Activated CD4-positive, alpha-beta memory T cell treated with anti-CD3 and anti-CD28 coated beads, Interleukin-2, amount 10 ng/mL, durations not matched to agents 7 days and 5 days (primary cell): ENCODE measurements at regions of chr1 and their contacts with region 1.

Region 1: DNA sequence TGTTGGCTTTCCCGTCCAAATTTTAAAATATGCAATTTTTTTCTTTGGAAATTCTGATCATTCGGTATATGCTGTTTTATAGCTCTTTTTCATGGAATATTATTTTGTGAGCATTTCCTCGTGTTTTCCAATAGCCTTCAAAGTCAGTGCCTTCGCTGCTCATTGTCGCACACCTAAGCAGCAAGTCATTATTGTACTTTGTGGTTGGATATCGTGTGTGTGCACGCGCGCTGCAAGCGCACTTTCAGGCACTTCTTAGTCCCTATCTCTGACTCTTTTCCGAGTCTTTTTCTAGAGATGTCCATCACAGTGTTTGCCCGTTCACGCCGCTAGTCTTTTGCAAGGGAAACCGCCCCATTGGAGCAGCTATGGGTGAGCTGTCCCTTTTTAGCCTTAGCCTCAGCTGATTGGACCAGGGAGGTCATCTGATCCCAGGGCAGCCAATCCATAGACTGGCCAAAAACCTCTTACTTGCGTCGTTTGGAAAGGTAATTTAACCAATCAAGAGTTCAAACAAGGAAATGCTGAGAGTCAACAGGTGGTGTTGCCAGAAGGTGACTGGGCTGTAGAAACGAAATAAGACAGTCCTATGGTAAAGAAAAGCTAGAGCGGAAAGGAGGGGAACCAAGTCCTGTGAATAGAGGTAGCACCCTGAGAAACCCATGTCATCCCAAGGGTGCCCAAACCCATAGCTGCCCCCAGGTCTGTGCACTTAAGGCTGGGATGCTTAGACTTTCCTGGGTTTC is 708 bp upstream of the HYI start:
- DNase-seq: peak; percentile 78
- H3K4me3 Mint-ChIP-seq: peak overlapping the region; percentile 78
- H3K27ac Mint-ChIP-seq: peak overlapping the region; percentile 77
- H3K4me1 Mint-ChIP-seq: peaks cover 25% of the 10 kb centered on the region
- H3K27me3 Mint-ChIP-seq: peaks cover 32% of the 10 kb centered on the region

Region 2: GRCh38 chr1:43441894-43442637 is 12.4 kb before region 1 on chr1:
- CTCF ChIA-PET with region 1: no interaction called
- POLR2A ChIA-PET with region 1: interaction called, 10 read pairs
- DNase-seq: no peak
- H3K4me3 Mint-ChIP-seq: no peak overlapping the region
- H3K27ac Mint-ChIP-seq: no peak overlapping the region
- H3K4me1 Mint-ChIP-seq: no peaks in the 10 kb centered on the region
- H3K27me3 Mint-ChIP-seq: no peaks in the 10 kb centered on the region

Region 3: DNA sequence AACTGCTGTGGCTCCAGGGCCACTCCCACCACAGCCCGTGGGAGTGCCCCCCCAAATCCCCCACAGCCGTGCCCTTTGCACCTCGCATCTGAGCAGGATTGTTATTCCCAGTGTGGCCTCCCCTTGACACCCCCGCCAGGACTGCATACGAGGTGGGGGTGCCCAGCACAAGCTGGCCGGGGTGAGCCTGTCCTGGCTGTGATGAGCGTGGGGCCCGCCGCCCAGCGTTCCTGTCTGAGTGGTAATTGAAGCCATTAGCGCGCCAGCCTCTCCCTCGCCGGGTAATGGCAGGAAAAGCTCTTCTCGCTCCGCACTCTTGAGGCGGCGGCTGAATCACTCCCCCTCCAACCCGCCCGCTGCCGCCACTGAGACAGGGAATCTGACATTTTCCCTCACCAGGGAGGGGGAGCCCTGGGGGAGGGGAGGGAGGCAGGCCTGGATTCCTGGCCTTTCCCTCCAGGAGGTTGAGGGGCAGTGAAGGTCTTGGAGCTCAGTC is 104.0 kb after region 1 on chr1:
- CTCF ChIA-PET with region 1: no interaction called
- POLR2A ChIA-PET with region 1: no interaction called
- DNase-seq: no peak
- H3K4me3 Mint-ChIP-seq: no peak overlapping the region
- H3K27ac Mint-ChIP-seq: no peak overlapping the region
- H3K4me1 Mint-ChIP-seq: peaks cover 4% of the 10 kb centered on the region
- H3K27me3 Mint-ChIP-seq: no peaks in the 10 kb centered on the region